Left cardiac atrium (tissue), 4 donors: ENCODE measurements at regions of chr6 and their contacts with region 1.

Region 1: DNA sequence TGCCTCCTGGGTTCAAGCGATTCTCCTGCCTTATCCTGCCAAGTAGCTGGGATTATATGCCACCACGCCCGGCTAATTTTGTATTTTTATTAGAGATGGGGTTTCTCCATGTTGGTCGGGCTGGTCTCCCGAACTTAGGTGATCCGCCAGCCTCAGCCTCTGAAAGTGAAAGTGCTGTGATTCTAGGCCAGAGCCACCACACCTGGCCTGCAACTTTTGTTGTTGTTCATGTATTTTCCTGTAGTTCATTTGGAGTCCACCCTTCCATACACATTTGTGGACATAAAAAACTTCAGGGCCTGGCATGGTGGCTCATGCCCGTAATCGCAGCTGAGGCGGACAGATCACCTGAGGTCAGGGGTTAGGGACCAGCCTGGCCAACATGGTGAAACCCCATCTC is 14.5 kb downstream of the HSPA1B start:
- DNase-seq: no peak
- ATAC-seq: no peak

Region 2: GRCh38 chr6:31513456-31514165 is 328.4 kb before region 1 on chr6:
- intact Hi-C with region 1: no loop called
- DNase-seq: no peak
- ATAC-seq: no peak

Region 3: GRCh38 chr6:31860349-31860748 is 18.3 kb after region 1 on chr6:
- intact Hi-C with region 1: loop called in 1 of 2 experiments (anchors 1 kb)
- DNase-seq: no peak
- ATAC-seq: no peak

Region 4: GRCh38 chr6:31908791-31909190 is 66.7 kb after region 1 on chr6:
- intact Hi-C with region 1: no loop called
- DNase-seq: no peak
- ATAC-seq: no peak